PC-3 (cell line): ENCODE measurements at regions of chr5 and their contacts with region 1.

Region 1: GRCh38 chr5:95646554-95647431 is at the start of gene RFESD:
- DNase-seq: peak; percentile 98
- ATAC-seq: peak; percentile 95
- H3K4me3 ChIP-seq: peak within 1 kb of the TSS; percentile 74
- H3K27ac ChIP-seq: peak within 1 kb of the TSS; percentile 64
- H3K4me1 ChIP-seq: peaks cover 12% of the 10 kb centered on the region
- H3K27me3 ChIP-seq: no peaks in the 10 kb centered on the region
- CTCF ChIP-seq: peak; percentile 22; the same call in 1 of the 2 replicates
- total RNA-seq, gene RFESD: 0.36 and 2.4 TPM in 2 replicates

Region 2: GRCh38 chr5:95256991-95257390 is 389.8 kb before region 1 on chr5:
- CTCF ChIA-PET with region 1: no interaction called
- POLR2A ChIA-PET with region 1: no interaction called
- intact Hi-C with region 1: no loop called
- DNase-seq: no peak
- ATAC-seq: no peak
- H3K4me3 ChIP-seq: no peak overlapping the region
- H3K27ac ChIP-seq: no peak overlapping the region
- H3K4me1 ChIP-seq: no peaks in the 10 kb centered on the region
- H3K27me3 ChIP-seq: no peaks in the 10 kb centered on the region
- CTCF ChIP-seq: no peak

Region 3: DNA sequence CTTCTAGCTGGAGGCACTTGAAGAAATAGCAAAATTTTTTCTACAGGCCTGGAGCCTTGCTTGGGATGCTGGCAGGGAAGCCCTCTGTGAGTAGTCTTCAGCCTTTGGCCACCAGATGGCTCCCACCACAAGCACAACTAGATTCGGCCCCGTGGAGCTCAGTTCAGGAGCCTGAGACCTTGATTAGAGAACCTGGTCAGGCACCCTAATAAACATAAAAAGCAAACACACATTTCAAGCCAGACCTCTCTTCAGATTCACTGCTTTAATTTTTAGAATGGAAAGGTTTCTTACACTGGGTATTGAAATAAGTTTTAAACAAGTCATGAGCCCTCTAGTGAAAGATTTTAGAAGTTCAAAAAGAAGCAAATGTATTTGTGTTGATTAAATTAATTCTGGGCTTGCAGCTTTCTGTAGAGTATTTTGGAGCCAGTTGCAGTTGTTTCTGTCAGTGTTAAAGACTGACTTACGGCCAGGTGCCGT is 134.3 kb after region 1 on chr5:
- CTCF ChIA-PET with region 1: interaction called, 4 read pairs
- POLR2A ChIA-PET with region 1: no interaction called
- intact Hi-C with region 1: loop called (anchors 1 kb)
- DNase-seq: peak; percentile 73
- ATAC-seq: peak; percentile 100
- H3K4me3 ChIP-seq: no peak overlapping the region
- H3K27ac ChIP-seq: no peak overlapping the region
- H3K4me1 ChIP-seq: no peaks in the 10 kb centered on the region
- H3K27me3 ChIP-seq: no peaks in the 10 kb centered on the region
- CTCF ChIP-seq: peak; percentile 95